Left ventricle myocardium inferior (tissue), 1 donor: ENCODE measurements at regions of chr4 and their contacts with region 1.

Region 1: DNA sequence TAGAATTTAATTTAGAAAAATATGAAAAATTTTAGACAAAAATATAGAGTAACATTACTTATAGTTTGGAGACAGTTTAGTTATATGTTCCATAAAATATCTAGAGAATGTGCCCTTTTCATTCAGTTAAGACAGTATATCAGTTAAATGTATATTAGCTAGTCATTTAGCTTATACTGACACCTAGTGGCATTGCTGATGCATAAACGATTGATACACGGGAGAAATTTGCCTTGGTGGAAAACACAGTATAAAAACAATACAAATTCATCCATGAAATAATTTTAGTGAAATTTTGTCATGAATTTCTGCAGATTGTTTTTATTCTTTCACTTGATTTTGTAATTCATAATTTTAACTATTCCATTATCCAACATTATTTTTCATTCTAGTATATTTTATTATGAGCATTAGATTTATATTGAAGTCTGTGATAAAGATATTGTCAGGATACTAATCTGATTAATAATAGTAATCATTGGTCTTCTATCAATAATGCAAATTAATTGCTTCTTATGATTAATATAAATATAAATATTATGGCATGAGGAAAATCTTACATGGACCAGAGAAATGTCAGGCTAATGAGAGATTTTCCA is 219.0 kb downstream of the TLL1 start:
- DNase-seq: no peak
- H3K4me3 ChIP-seq: no peak overlapping the region
- H3K27ac ChIP-seq: no peak overlapping the region
- H3K4me1 ChIP-seq: no peaks in the 10 kb centered on the region
- H3K27me3 ChIP-seq: no peaks in the 10 kb centered on the region
- CTCF ChIP-seq: peak; percentile 81

Region 2: GRCh38 chr4:165537028-165537648 is 554.9 kb before region 1 on chr4:
- intact Hi-C with region 1: loop called (anchors 2 kb)
- DNase-seq: no peak
- H3K4me3 ChIP-seq: no peak overlapping the region
- H3K27ac ChIP-seq: no peak overlapping the region
- H3K4me1 ChIP-seq: no peaks in the 10 kb centered on the region
- H3K27me3 ChIP-seq: no peaks in the 10 kb centered on the region
- CTCF ChIP-seq: peak; percentile 82

Region 3: GRCh38 chr4:165994701-165995100 is 97.3 kb before region 1 on chr4:
- intact Hi-C with region 1: no loop called
- DNase-seq: no peak
- H3K4me3 ChIP-seq: no peak overlapping the region
- H3K27ac ChIP-seq: no peak overlapping the region
- H3K4me1 ChIP-seq: no peaks in the 10 kb centered on the region
- H3K27me3 ChIP-seq: no peaks in the 10 kb centered on the region
- CTCF ChIP-seq: no peak

Region 4: DNA sequence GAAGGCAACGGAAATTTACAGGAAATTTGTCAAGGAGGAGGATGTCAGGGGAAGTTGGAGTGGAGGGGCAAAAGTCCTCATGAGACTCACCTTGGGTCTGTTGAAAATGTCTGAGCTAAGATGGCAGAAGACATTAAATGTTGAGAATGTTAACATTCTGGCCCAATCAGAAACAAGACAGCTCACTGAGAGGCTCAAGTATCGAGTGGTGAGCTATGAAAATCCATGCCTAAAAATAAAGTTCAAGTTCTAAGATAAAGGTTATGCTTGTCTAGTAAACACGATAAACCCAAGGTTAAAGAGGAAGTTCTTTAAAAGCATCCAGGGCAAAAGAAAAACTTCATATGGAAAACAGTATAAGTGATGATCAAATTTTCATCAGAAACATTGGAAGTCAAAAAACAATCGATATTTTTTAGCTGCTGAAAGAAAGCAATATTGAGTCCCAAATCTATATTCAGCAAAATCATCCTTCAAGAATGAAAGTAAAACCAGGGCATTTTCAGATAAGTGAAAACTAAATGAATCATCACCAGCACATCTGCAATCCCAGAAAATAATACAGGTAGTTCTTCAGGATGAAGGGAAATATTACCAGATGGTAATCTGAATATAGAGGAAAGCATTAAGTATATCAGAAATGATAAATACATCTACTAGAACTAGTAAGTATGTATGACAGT is 243.4 kb after region 1 on chr4:
- intact Hi-C with region 1: no loop called
- DNase-seq: no peak
- H3K4me3 ChIP-seq: no peak overlapping the region
- H3K27ac ChIP-seq: no peak overlapping the region
- H3K4me1 ChIP-seq: no peaks in the 10 kb centered on the region
- H3K27me3 ChIP-seq: no peaks in the 10 kb centered on the region
- CTCF ChIP-seq: no peak